HCT116 (cell line): ENCODE measurements at regions of chr4 and their contacts with region 1.

Region 1: GRCh38 chr4:182400790-182401189 is 157.6 kb downstream of the TENM3 start:
- DNase-seq: no peak
- ATAC-seq: no peak
- H3K4me3 ChIP-seq: no peak overlapping the region
- H3K27ac ChIP-seq: no peak overlapping the region
- H3K4me1 ChIP-seq: no peaks in the 10 kb centered on the region
- H3K27me3 ChIP-seq: peaks cover 40% of the 10 kb centered on the region
- CTCF ChIP-seq: no peak
- POLR2A ChIP-seq: no peak
- RAD21 ChIP-seq: no peak

Region 2: GRCh38 chr4:182427554-182427953 is 26.8 kb after region 1 on chr4:
- CTCF ChIA-PET with region 1: no interaction called
- POLR2A ChIA-PET with region 1: no interaction called
- RAD21 ChIA-PET with region 1: no interaction called
- intact Hi-C with region 1: loop called (anchors 1 kb)
- DNase-seq: no peak
- ATAC-seq: no peak
- H3K4me3 ChIP-seq: no peak overlapping the region
- H3K27ac ChIP-seq: no peak overlapping the region
- H3K4me1 ChIP-seq: no peaks in the 10 kb centered on the region
- H3K27me3 ChIP-seq: no peaks in the 10 kb centered on the region
- CTCF ChIP-seq: no peak
- POLR2A ChIP-seq: no peak
- RAD21 ChIP-seq: no peak